HEK293 (cell line): ENCODE measurements at regions of chr12 and their contacts with region 1.

Region 1: GRCh38 chr12:92928962-92929915 is at the start of gene EEA1:
- H3K4me3 ChIP-seq: peak within 1 kb of the TSS; percentile 68
- H3K27ac ChIP-seq: peak within 1 kb of the TSS; percentile 68
- H3K4me1 ChIP-seq: peaks cover 11% of the 10 kb centered on the region; the same call in 1 of the 2 replicates
- CTCF ChIP-seq: peak; percentile 56

Region 2: GRCh38 chr12:92945659-92946220 is 16.5 kb after region 1 on chr12:
- CTCF ChIA-PET with region 1: no interaction called
- POLR2A ChIA-PET with region 1: interaction called, 10 read pairs
- H3K4me3 ChIP-seq: no peak overlapping the region
- H3K27ac ChIP-seq: no peak overlapping the region
- H3K4me1 ChIP-seq: no peaks in the 10 kb centered on the region; the same call in 1 of the 2 replicates
- CTCF ChIP-seq: no peak

Region 3: DNA sequence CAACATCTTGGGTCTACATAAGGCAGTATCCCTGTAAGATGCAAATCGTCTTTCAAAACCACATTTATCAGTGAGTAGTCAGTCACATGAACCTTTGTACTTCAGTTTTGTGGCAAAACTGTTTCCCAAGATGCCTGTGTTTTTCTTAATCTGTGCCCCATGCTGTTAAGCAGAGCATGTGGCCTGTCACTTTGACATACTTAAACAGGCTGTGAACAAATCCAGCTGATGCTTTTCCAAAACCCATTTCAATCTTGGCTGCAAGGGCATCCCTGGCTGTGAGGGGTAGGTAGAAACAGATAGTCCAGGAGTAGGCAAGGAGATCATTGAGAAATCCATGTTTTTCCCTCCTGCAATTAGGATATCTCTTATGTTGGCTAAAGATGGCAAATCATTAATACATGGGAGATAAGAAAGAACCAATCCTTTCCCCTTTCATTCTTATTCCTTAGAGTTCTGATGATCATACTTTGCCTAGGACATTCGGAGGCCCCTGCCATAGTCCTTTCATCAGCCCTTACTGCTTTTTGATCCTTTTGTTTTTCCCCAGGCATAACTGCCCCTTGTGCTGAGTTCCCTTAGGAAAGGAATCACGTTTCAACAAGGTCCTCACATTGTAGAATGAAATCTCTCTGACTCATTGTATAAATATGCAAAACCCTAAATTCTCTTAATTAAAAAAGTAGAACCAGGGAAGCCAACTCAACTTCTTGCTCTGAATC is 120.9 kb after region 1 on chr12:
- CTCF ChIA-PET with region 1: no interaction called
- POLR2A ChIA-PET with region 1: no interaction called
- H3K4me3 ChIP-seq: no peak overlapping the region
- H3K27ac ChIP-seq: no peak overlapping the region
- H3K4me1 ChIP-seq: no peaks in the 10 kb centered on the region; the same call in 1 of the 2 replicates
- CTCF ChIP-seq: no peak